Endothelial cell of umbilical vein (primary cell): ENCODE measurements at regions of chr2 and their contacts with region 1.

Region 1: GRCh38 chr2:31287654-31288053 is 53.7 kb downstream of the EHD3 start:
- DNase-seq: peak; percentile 68
- H3K4me3 ChIP-seq: no peak overlapping the region
- H3K27ac ChIP-seq: peak overlapping the region; percentile 36
- H3K4me1 ChIP-seq: peaks cover 29% of the 10 kb centered on the region
- H3K27me3 ChIP-seq: no peaks in the 10 kb centered on the region
- CTCF ChIP-seq: no peak
- POLR2A ChIP-seq: no peak

Region 2: DNA sequence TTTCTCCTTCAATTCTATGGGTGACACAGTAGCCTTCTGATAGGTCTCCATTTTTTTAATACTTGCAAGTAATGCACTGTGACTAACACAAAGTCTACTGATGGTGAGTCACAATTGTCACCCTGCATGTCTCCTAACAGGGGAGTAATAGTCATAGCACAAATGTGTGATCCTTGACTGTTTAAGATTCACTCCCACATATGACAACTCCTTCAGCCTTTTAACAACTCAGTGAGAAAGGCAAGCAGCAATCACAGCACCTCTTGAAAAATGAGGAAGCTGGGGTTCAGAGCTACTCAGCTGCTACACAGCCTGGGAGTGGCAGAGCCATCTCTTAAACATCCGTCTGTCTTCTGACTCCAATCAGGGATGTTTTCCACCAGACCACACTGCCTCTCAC is 10.1 kb after region 1 on chr2:
- CTCF ChIA-PET with region 1: interaction called, 3 read pairs
- POLR2A ChIA-PET with region 1: no interaction called
- dilution Hi-C with region 1: no loop called
- intact Hi-C with region 1: loop called (anchors 1 kb)
- DNase-seq: no peak
- H3K4me3 ChIP-seq: no peak overlapping the region
- H3K27ac ChIP-seq: no peak overlapping the region
- H3K4me1 ChIP-seq: peaks cover 16% of the 10 kb centered on the region
- H3K27me3 ChIP-seq: peaks cover 0 to 2% of the 10 kb centered on the region in 2 experiments
- CTCF ChIP-seq: no peak
- POLR2A ChIP-seq: no peak

Region 3: GRCh38 chr2:31328026-31328425 is 40.4 kb after region 1 on chr2:
- CTCF ChIA-PET with region 1: interaction called, 3 read pairs
- POLR2A ChIA-PET with region 1: no interaction called
- dilution Hi-C with region 1: no loop called
- intact Hi-C with region 1: loop called (anchors 5 kb)
- DNase-seq: no peak
- H3K4me3 ChIP-seq: no peak overlapping the region
- H3K27ac ChIP-seq: no peak overlapping the region
- H3K4me1 ChIP-seq: no peaks in the 10 kb centered on the region
- H3K27me3 ChIP-seq: peaks cover 0 to 3% of the 10 kb centered on the region in 2 experiments
- CTCF ChIP-seq: no peak
- POLR2A ChIP-seq: no peak

Region 4: GRCh38 chr2:31354837-31355236 is 67.2 kb after region 1 on chr2:
- CTCF ChIA-PET with region 1: no interaction called
- POLR2A ChIA-PET with region 1: no interaction called
- dilution Hi-C with region 1: no loop called
- intact Hi-C with region 1: no loop called
- DNase-seq: no peak
- H3K4me3 ChIP-seq: no peak overlapping the region
- H3K27ac ChIP-seq: no peak overlapping the region
- H3K4me1 ChIP-seq: no peaks in the 10 kb centered on the region
- H3K27me3 ChIP-seq: no peaks in the 10 kb centered on the region
- CTCF ChIP-seq: no peak
- POLR2A ChIP-seq: no peak